H1 (cell line): ENCODE measurements at regions of chr10 and their contacts with region 1.

Region 1: GRCh38 chr10:97686962-97687784 is at the start of gene AVPI1:
- DNase-seq: peak; percentile 96 to 98
- H3K4me3 ChIP-seq: peak within 1 kb of the TSS; percentile 60 to 74 (median 72)
- H3K27ac ChIP-seq: peak within 1 kb of the TSS; percentile 62
- H3K4me1 ChIP-seq: peaks cover 0 to 16% (median 5%) of the 10 kb centered on the region in 4 experiments; a peak in 4 of 7 replicates
- H3K27me3 ChIP-seq: peaks cover 0 to 7% (median 0%) of the 10 kb centered on the region in 4 experiments; a peak in 2 of 7 replicates
- CTCF ChIP-seq: no peak
- EP300 ChIP-seq: peak in 1 of 2 experiments; percentile 5; a peak in 1 of 3 replicates
- POLR2A ChIP-seq: peak; percentile 62 to 89
- RAD21 ChIP-seq: no peak
- total RNA-seq, gene AVPI1: 7.8 and 9.0 TPM in 2 replicates

Region 2: GRCh38 chr10:97676770-97677581 is 10.2 kb before region 1 on chr10:
- CTCF ChIA-PET with region 1: interaction called, 27 read pairs
- POLR2A ChIA-PET with region 1: interaction called, 20 read pairs
- DNase-seq: peak in 1 of 2 experiments; percentile 55
- H3K4me3 ChIP-seq: no peak overlapping the region
- H3K27ac ChIP-seq: no peak overlapping the region
- H3K4me1 ChIP-seq: no peaks in the 10 kb centered on the region
- H3K27me3 ChIP-seq: no peaks in the 10 kb centered on the region
- CTCF ChIP-seq: peak; percentile 75 to 85 (median 77)
- EP300 ChIP-seq: no peak
- POLR2A ChIP-seq: peak in 1 of 2 experiments; percentile 47; a peak in 1 of 3 replicates
- RAD21 ChIP-seq: peak; percentile 84 to 85

Region 3: GRCh38 chr10:97731346-97732051 is 44.3 kb after region 1 on chr10:
- CTCF ChIA-PET with region 1: interaction called, 30 read pairs
- POLR2A ChIA-PET with region 1: interaction called, 16 read pairs
- DNase-seq: peak in 1 of 2 experiments; percentile 72
- H3K4me3 ChIP-seq: no peak overlapping the region
- H3K27ac ChIP-seq: no peak overlapping the region
- H3K4me1 ChIP-seq: no peaks in the 10 kb centered on the region
- H3K27me3 ChIP-seq: peaks cover 11 to 19% (median 14%) of the 10 kb centered on the region in 4 experiments
- CTCF ChIP-seq: peak; percentile 32 to 94 (median 94)
- EP300 ChIP-seq: no peak
- POLR2A ChIP-seq: no peak
- RAD21 ChIP-seq: peak; percentile 98 to 99

Region 4: DNA sequence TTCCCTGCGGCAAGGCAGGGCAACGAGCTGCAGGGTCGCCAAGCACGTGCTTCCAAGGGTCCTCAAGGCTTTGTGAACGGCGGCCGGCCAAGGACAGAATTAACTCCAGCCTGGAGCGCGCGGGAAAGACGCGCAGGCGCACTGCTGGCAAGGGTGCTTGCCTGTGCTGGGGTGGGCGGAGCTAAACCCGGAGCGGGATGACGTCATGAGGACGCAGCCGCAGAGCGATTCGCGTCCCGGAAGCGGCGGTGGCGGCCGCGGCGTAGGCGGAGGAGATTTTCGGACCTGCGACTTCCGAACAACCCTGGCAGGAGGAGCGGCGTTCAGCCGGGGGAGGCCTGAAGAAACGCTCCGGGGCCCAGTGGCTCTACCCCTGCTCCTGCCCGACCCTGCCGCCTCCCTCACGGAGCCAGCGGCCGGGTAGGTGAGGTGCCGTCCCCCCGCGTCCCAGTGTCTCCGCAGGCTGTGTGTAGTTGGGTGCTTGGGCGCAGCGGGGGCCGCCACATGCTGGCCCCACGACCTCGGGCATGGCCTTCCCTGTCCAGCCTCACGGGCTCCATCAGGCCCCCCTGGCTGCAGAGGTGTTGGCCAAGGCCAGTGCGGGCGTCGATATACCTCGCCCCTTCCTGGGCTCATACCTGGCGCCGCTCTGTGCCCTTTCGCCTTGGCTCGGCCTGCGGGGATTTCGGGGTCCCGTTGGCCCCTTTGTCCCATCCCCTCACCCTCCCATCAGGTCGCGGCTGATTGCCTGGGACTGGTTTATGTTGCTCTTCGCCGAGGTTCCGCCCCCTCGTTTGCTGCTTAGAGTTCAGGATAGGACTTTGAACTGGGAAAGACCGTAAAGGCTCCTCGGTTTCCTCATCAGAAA is 50.0 kb after region 1 on chr10 and contains the start of gene ZFYVE27:
- CTCF ChIA-PET with region 1: interaction called, 30 read pairs
- POLR2A ChIA-PET with region 1: interaction called, 16 read pairs
- DNase-seq: peak; percentile 97 to 99
- H3K4me3 ChIP-seq: peak within 1 kb of the TSS; percentile 79 to 96 (median 89)
- H3K27ac ChIP-seq: peak within 1 kb of the TSS; percentile 73; the same call in 1 of the 2 replicates
- H3K4me1 ChIP-seq: peaks cover 0 to 6% (median 3%) of the 10 kb centered on the region in 4 experiments; a peak in 5 of 7 replicates
- H3K27me3 ChIP-seq: peaks cover 12 to 21% (median 17%) of the 10 kb centered on the region in 4 experiments
- CTCF ChIP-seq: no peak
- EP300 ChIP-seq: no peak
- POLR2A ChIP-seq: peak in 1 of 2 experiments; percentile 83; a peak in 2 of 3 replicates
- RAD21 ChIP-seq: no peak
- total RNA-seq, gene ZFYVE27: 19.8 and 22.7 TPM in 2 replicates